ENCODE measurements at regions of chr19 and their contacts with region 1.

Region 1: GRCh38 chr19:41263850-41264580 is at the start of gene HNRNPUL1:
- DNase-seq: peak; percentile 98
- ATAC-seq: peak; percentile 79
- H3K4me3 Mint-ChIP-seq: peak within 1 kb of the TSS; percentile 95
- H3K27ac Mint-ChIP-seq: peak within 1 kb of the TSS; percentile 100
- H3K4me1 Mint-ChIP-seq: peaks cover 31% of the 10 kb centered on the region
- H3K27me3 Mint-ChIP-seq: no peaks in the 10 kb centered on the region
- CTCF ChIP-seq: no peak
- total RNA-seq, gene HNRNPUL1: 257 to 259 TPM

Region 2: GRCh38 chr19:41175801-41176777 is 87.9 kb before region 1 on chr19:
- CTCF ChIA-PET with region 1: no interaction called
- POLR2A ChIA-PET with region 1: no interaction called
- intact Hi-C with region 1: no loop called
- DNase-seq: peak; percentile 74
- ATAC-seq: peak; percentile 100
- H3K4me3 Mint-ChIP-seq: no peak overlapping the region
- H3K27ac Mint-ChIP-seq: peak overlapping the region; percentile 29
- H3K4me1 Mint-ChIP-seq: peaks cover 10% of the 10 kb centered on the region
- H3K27me3 Mint-ChIP-seq: no peaks in the 10 kb centered on the region
- CTCF ChIP-seq: no peak

Region 3: DNA sequence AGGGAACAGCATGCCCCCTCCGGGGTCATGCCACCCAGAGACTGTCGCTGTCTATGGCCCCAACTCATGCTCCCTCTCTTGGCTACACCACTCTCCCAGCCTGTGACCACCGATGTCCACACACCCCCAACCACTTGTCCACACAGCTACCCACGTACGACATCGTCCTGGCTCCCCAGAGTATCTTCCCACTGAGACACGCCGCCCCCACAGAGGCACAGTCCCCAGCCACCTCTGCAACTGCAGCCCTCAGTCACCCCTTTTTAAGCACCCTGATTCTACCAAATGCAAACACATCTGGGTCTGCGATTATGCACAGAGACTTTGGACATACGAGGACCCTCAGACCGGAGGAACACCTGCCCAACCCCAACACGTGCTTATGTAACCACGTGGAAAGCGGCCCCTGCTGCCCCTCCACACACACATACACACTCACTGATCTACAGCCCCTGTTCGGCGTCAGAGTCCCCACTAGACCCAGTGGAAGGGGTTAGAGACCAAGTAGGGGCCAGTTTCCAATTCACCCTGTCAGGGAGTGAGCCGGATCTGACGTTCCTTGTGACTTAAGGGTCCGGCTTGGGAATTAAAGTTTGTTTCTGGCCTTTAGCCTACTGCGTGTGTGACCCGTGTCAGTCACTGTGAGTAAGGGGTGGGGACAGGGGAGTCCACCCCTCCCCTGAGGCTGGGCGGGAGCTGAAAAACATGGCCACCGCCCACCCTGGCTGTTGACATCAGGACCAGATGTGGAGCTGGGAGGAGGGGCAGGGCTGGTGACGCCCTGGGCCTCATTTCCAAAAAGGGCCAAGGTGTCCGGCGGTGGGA is 56.9 kb before region 1 on chr19:
- CTCF ChIA-PET with region 1: interaction called, 59 read pairs
- POLR2A ChIA-PET with region 1: interaction called, 8 read pairs
- intact Hi-C with region 1: loop called (anchors 2 kb)
- DNase-seq: no peak
- ATAC-seq: no peak
- H3K4me3 Mint-ChIP-seq: no peak overlapping the region
- H3K27ac Mint-ChIP-seq: no peak overlapping the region
- H3K4me1 Mint-ChIP-seq: peaks cover 7% of the 10 kb centered on the region
- H3K27me3 Mint-ChIP-seq: no peaks in the 10 kb centered on the region
- CTCF ChIP-seq: no peak

Region 4: GRCh38 chr19:41226053-41226873 is 37.8 kb before region 1 on chr19:
- CTCF ChIA-PET with region 1: interaction called, 5 read pairs
- POLR2A ChIA-PET with region 1: interaction called, 6 read pairs
- intact Hi-C with region 1: loop called (anchors 5 kb)
- DNase-seq: peak; percentile 54
- ATAC-seq: peak; percentile 25
- H3K4me3 Mint-ChIP-seq: peak overlapping the region; percentile 71
- H3K27ac Mint-ChIP-seq: peak overlapping the region; percentile 91
- H3K4me1 Mint-ChIP-seq: peaks cover 32% of the 10 kb centered on the region
- H3K27me3 Mint-ChIP-seq: peaks cover 14% of the 10 kb centered on the region
- CTCF ChIP-seq: no peak

Region 5: GRCh38 chr19:41298348-41298964 is 34.4 kb after region 1 on chr19:
- CTCF ChIA-PET with region 1: interaction called, 33 read pairs
- POLR2A ChIA-PET with region 1: interaction called, 179 read pairs
- intact Hi-C with region 1: no loop called
- DNase-seq: peak; percentile 33
- ATAC-seq: no peak
- H3K4me3 Mint-ChIP-seq: no peak overlapping the region
- H3K27ac Mint-ChIP-seq: peak overlapping the region; percentile 84
- H3K4me1 Mint-ChIP-seq: peaks cover 75% of the 10 kb centered on the region
- H3K27me3 Mint-ChIP-seq: no peaks in the 10 kb centered on the region
- CTCF ChIP-seq: no peak

Region 6: DNA sequence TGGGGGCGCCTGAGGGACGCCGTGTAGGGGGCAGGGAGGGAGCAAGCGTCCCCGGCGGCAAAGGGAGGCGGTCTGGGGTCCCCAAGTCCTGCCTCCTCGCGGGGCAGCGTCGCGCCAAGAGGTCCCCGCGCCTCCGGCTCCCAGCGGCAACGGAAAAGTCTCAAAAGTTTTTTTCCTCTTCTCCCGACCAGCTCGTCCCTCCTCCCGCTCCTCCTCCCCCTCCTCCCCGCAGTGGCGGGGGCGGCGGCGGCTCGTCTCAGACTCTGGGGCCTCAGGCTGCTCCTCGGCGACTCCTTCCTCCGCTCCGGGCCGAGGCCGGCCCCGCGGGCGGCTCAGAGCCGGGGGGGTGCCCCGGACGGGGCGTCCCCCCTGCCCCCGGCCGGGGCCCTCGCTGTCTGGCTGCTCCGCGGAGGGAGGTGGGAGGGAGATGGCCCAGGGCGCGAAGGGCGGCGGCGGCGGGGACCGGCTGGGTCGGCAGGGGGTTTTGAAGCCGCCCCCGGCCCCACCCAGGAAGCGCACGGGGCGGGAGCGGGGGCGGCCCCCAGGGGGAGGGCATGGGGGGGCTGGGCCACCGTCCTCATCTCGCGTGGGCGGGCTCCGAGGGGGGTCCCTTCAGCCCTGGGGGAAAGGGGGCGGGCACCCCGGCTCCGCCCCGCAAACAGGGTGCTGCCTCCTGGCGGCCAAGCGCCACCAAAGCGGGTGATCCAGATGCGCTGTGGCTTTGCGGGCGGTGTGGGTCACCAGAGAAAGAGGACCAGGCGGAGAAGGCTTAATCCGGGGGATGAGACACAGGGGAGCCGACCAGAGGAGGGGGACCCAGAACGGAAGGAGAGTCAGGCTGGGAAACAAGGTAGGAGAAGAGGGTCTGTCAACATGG is 89.7 kb after region 1 on chr19 and contains the start of gene TGFB1:
- CTCF ChIA-PET with region 1: interaction called, 6 read pairs
- POLR2A ChIA-PET with region 1: interaction called, 44 read pairs
- intact Hi-C with region 1: loop called (anchors 10 kb)
- DNase-seq: peak; percentile 94
- ATAC-seq: peak; percentile 59
- H3K4me3 Mint-ChIP-seq: peak within 1 kb of the TSS; percentile 100
- H3K27ac Mint-ChIP-seq: peak within 1 kb of the TSS; percentile 99
- H3K4me1 Mint-ChIP-seq: peaks cover 60% of the 10 kb centered on the region
- H3K27me3 Mint-ChIP-seq: no peaks in the 10 kb centered on the region
- CTCF ChIP-seq: peak; percentile 83
- total RNA-seq, gene TGFB1: 112 to 123 TPM

Region 7: GRCh38 chr19:41409288-41409687 is 145.3 kb after region 1 on chr19:
- CTCF ChIA-PET with region 1: no interaction called
- POLR2A ChIA-PET with region 1: no interaction called
- intact Hi-C with region 1: no loop called
- DNase-seq: no peak
- ATAC-seq: no peak
- H3K4me3 Mint-ChIP-seq: no peak overlapping the region
- H3K27ac Mint-ChIP-seq: no peak overlapping the region
- H3K4me1 Mint-ChIP-seq: peaks cover 12% of the 10 kb centered on the region
- H3K27me3 Mint-ChIP-seq: no peaks in the 10 kb centered on the region
- CTCF ChIP-seq: no peak

Measured in activated CD8-positive, alpha-beta T cell treated with anti-CD3 and anti-CD28 coated beads for 36 hours (primary cell).